Activated B cell treated with CpG ODN at 0.5 μM for 24 hours (primary cell): ENCODE measurements at regions of chr19 and their contacts with region 1.

Region 1: GRCh38 chr19:41570639-41571112 is 5.3 kb upstream of the CEACAM21 start:
- DNase-seq: peak; percentile 77
- ATAC-seq: peak; percentile 97
- H3K4me3 Mint-ChIP-seq: no peak overlapping the region
- H3K27ac Mint-ChIP-seq: no peak overlapping the region
- H3K4me1 Mint-ChIP-seq: peaks cover 14% of the 10 kb centered on the region
- H3K27me3 Mint-ChIP-seq: peaks cover 2% of the 10 kb centered on the region
- CTCF ChIP-seq: peak; percentile 50

Region 2: GRCh38 chr19:40974633-40975037 is 596.0 kb before region 1 on chr19:
- CTCF ChIA-PET with region 1: no interaction called
- POLR2A ChIA-PET with region 1: no interaction called
- intact Hi-C with region 1: loop called (anchors 5 kb)
- DNase-seq: peak; percentile 46
- ATAC-seq: peak; percentile 62
- H3K4me3 Mint-ChIP-seq: no peak overlapping the region
- H3K27ac Mint-ChIP-seq: no peak overlapping the region
- H3K4me1 Mint-ChIP-seq: no peaks in the 10 kb centered on the region
- H3K27me3 Mint-ChIP-seq: peaks cover 29% of the 10 kb centered on the region
- CTCF ChIP-seq: no peak

Region 3: DNA sequence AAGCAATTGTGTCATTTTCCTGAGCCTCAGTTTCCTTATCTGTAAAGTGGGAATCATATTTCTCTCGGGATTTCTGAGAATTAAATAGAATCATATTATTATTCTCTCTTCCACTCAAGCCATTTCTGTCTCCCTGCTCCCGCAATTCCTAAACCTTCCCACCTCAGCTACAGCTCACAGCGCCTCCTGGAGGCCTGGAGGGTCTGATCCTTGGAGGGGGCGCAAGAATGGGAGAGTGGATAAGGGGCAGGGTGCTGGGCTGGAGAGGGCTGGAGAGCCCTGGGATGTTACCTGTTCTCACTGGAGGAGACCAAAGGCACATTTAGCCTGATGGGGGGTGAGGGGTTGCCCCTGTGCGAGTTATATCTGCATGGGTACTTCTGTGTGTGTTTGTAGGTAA is 408.8 kb before region 1 on chr19:
- CTCF ChIA-PET with region 1: no interaction called
- POLR2A ChIA-PET with region 1: no interaction called
- intact Hi-C with region 1: no loop called
- DNase-seq: no peak
- ATAC-seq: no peak
- H3K4me3 Mint-ChIP-seq: no peak overlapping the region
- H3K27ac Mint-ChIP-seq: no peak overlapping the region
- H3K4me1 Mint-ChIP-seq: no peaks in the 10 kb centered on the region
- H3K27me3 Mint-ChIP-seq: peaks cover 2% of the 10 kb centered on the region
- CTCF ChIP-seq: no peak

Region 4: DNA sequence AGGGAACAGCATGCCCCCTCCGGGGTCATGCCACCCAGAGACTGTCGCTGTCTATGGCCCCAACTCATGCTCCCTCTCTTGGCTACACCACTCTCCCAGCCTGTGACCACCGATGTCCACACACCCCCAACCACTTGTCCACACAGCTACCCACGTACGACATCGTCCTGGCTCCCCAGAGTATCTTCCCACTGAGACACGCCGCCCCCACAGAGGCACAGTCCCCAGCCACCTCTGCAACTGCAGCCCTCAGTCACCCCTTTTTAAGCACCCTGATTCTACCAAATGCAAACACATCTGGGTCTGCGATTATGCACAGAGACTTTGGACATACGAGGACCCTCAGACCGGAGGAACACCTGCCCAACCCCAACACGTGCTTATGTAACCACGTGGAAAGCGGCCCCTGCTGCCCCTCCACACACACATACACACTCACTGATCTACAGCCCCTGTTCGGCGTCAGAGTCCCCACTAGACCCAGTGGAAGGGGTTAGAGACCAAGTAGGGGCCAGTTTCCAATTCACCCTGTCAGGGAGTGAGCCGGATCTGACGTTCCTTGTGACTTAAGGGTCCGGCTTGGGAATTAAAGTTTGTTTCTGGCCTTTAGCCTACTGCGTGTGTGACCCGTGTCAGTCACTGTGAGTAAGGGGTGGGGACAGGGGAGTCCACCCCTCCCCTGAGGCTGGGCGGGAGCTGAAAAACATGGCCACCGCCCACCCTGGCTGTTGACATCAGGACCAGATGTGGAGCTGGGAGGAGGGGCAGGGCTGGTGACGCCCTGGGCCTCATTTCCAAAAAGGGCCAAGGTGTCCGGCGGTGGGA is 363.5 kb before region 1 on chr19:
- CTCF ChIA-PET with region 1: interaction called, 3 read pairs
- POLR2A ChIA-PET with region 1: no interaction called
- intact Hi-C with region 1: loop called (anchors 1 kb)
- DNase-seq: no peak
- ATAC-seq: no peak
- H3K4me3 Mint-ChIP-seq: no peak overlapping the region
- H3K27ac Mint-ChIP-seq: no peak overlapping the region
- H3K4me1 Mint-ChIP-seq: no peaks in the 10 kb centered on the region
- H3K27me3 Mint-ChIP-seq: peaks cover 3% of the 10 kb centered on the region
- CTCF ChIP-seq: no peak